Sciatic nerve (tissue), 2 donors: ENCODE measurements at regions of chr4 and their contacts with region 1.

Region 1: GRCh38 chr4:124913237-124913636 is 200.7 kb upstream of the ANKRD50 start:
- DNase-seq: no peak
- ATAC-seq: no peak

Region 2: GRCh38 chr4:124964251-124964650 is 51.0 kb after region 1 on chr4:
- intact Hi-C with region 1: loop called (anchors 10 kb)
- DNase-seq: no peak
- ATAC-seq: no peak